Ovary (tissue), 10 donors: ENCODE measurements at regions of chr19 and their contacts with region 1.

Region 1: GRCh38 chr19:1094975-1095701 is at the start of gene POLR2E:
- DNase-seq: peak; percentile 99
- H3K4me3 ChIP-seq: peak within 1 kb of the TSS; percentile 77
- H3K27ac ChIP-seq: peak within 1 kb of the TSS in 1 of 2 donors; percentile 58
- H3K4me1 ChIP-seq: peaks cover 12% of the 10 kb centered on the region
- H3K27me3 ChIP-seq: no peaks in the 10 kb centered on the region
- CTCF ChIP-seq: no peak
- EP300 ChIP-seq: no peak
- POLR2A ChIP-seq: peak; percentile 64
- total RNA-seq, gene POLR2E: 88.2 to 157 (median 140) TPM

Region 2: DNA sequence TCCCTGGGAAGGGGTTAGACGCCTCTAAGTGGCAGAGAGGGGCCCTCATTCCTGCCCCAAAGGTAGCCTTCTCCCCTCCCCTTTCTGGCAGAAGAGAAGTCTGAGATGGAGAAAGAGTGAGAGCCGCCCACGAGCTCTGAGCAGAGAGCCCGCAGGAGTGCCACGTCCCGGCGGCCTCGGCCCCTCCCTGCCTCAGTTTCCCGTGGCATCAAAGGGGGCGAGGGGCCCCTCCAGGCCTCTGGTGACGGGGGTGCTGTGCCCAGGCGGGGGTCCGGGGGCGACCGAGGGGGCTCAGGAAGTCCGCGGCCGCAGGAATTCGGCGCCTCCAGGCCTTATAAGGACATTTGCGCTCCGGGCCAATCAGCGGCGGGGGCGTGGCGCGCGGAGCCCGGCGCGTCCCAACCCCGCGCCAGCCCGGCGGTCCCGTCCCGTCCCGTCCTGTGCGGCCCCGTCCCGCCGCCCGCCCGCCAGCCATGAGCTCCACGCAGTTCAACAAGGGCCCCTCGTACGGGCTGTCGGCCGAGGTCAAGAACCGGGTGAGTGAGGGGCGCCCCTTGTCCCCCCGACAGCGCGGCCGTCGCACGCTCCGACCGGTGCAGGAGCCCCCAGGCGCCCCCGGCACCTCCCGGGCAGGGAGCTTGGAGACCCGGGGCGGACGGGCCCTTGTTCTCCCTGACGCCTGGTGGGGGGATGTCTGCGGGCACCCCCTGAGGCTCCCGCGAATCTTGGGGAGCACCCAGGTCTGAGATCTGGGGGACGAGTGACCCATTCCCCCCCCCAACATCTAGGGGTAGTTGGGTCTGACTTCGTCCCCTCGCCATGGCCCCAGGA is 68.7 kb before region 1 on chr19 and contains the start of gene CNN2:
- intact Hi-C with region 1: loop called in 2 of 4 experiments (anchors 5 kb)
- DNase-seq: peak; percentile 84 to 91 (median 84)
- H3K4me3 ChIP-seq: peak within 1 kb of the TSS; percentile 83
- H3K27ac ChIP-seq: peak within 1 kb of the TSS; percentile 87 to 95
- H3K4me1 ChIP-seq: peaks cover 10% of the 10 kb centered on the region
- H3K27me3 ChIP-seq: no peaks in the 10 kb centered on the region
- CTCF ChIP-seq: no peak
- EP300 ChIP-seq: no peak
- POLR2A ChIP-seq: peak; percentile 91
- total RNA-seq, gene CNN2: 60.6 to 438 (median 210) TPM